ENCODE measurements at regions of chr2 and their contacts with region 1.

Region 1: GRCh38 chr2:218406209-218406948 is 6.7 kb downstream of the CTDSP1 start:
- DNase-seq: peak; percentile 73 to 97 (median 94)
- ATAC-seq: peak; percentile 69
- H3K4me3 ChIP-seq: peak overlapping the region; percentile 59
- H3K4me3 Mint-ChIP-seq: peak overlapping the region; percentile 90
- H3K27ac ChIP-seq: peak overlapping the region; percentile 61 to 78
- H3K27ac Mint-ChIP-seq: peak overlapping the region; percentile 88
- H3K4me1 ChIP-seq: peaks cover 68% of the 10 kb centered on the region
- H3K4me1 Mint-ChIP-seq: peaks cover 57% of the 10 kb centered on the region
- H3K27me3 ChIP-seq: no peaks in the 10 kb centered on the region
- H3K27me3 Mint-ChIP-seq: no peaks in the 10 kb centered on the region
- CTCF ChIP-seq: peak; percentile 67

Region 2: GRCh38 chr2:218466016-218466521 is 59.7 kb after region 1 on chr2:
- CTCF ChIA-PET with region 1: interaction called, 4 read pairs
- POLR2A ChIA-PET with region 1: interaction called, 3 read pairs
- intact Hi-C with region 1: loop called (anchors 1 to 2 kb)
- DNase-seq: peak in 3 of 14 experiments; percentile 13 to 31 (median 30)
- ATAC-seq: no peak
- H3K4me3 ChIP-seq: no peak overlapping the region
- H3K4me3 Mint-ChIP-seq: no peak overlapping the region
- H3K27ac ChIP-seq: no peak overlapping the region
- H3K27ac Mint-ChIP-seq: no peak overlapping the region
- H3K4me1 ChIP-seq: no peaks in the 10 kb centered on the region
- H3K4me1 Mint-ChIP-seq: peaks cover 7% of the 10 kb centered on the region
- H3K27me3 ChIP-seq: no peaks in the 10 kb centered on the region
- H3K27me3 Mint-ChIP-seq: no peaks in the 10 kb centered on the region
- CTCF ChIP-seq: peak; percentile 74

Region 3: GRCh38 chr2:218516614-218517013 is 110.2 kb after region 1 on chr2:
- CTCF ChIA-PET with region 1: no interaction called
- POLR2A ChIA-PET with region 1: interaction called, 4 read pairs
- intact Hi-C with region 1: loop called (anchors 1 to 5 kb)
- DNase-seq: peak in 5 of 14 experiments; percentile 3 to 66 (median 48)
- ATAC-seq: peak; percentile 75
- H3K4me3 ChIP-seq: no peak overlapping the region
- H3K4me3 Mint-ChIP-seq: no peak overlapping the region
- H3K27ac ChIP-seq: no peak overlapping the region
- H3K27ac Mint-ChIP-seq: no peak overlapping the region
- H3K4me1 ChIP-seq: no peaks in the 10 kb centered on the region
- H3K4me1 Mint-ChIP-seq: peaks cover 5% of the 10 kb centered on the region
- H3K27me3 ChIP-seq: no peaks in the 10 kb centered on the region
- H3K27me3 Mint-ChIP-seq: no peaks in the 10 kb centered on the region
- CTCF ChIP-seq: peak; percentile 64

Region 4: DNA sequence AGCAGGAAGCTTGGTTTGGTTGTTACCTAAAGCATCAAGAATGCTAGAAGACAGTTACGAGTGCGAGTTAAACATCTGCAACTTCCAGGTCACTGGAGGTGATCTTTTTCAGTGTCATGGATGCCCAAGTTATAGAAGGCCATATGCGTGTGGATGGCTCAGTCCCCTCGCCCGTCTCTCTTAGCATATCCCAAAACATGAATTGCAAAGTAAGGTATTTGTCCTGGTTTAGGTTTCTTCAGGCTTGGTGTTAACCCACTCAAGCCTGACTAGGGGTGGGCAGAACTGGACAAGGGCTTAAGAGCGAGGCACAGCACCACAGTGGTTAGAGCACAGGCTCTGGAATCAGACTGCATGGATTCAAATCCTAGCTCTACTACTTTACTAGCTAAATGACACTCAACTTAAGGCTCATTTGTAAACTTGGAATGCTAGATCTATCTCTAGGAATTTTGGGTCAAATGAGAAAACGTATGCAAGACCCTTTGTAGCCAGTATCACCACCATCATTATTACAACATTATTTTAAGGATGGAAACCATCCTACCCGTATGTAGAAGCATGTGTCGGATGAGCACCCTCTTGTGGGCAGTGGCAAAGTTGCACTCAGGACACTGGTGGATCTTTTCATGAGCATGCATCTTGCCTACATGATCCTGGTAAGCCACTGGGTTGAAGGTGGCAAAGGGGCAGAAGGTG is 241.9 kb after region 1 on chr2:
- CTCF ChIA-PET with region 1: no interaction called
- POLR2A ChIA-PET with region 1: no interaction called
- intact Hi-C with region 1: loop called (anchors 1 to 2 kb)
- DNase-seq: peak; percentile 25 to 77 (median 42)
- ATAC-seq: peak; percentile 92
- H3K4me3 ChIP-seq: no peak overlapping the region
- H3K4me3 Mint-ChIP-seq: no peak overlapping the region
- H3K27ac ChIP-seq: no peak overlapping the region
- H3K27ac Mint-ChIP-seq: no peak overlapping the region
- H3K4me1 ChIP-seq: peaks cover 8% of the 10 kb centered on the region
- H3K4me1 Mint-ChIP-seq: peaks cover 6% of the 10 kb centered on the region
- H3K27me3 ChIP-seq: no peaks in the 10 kb centered on the region
- H3K27me3 Mint-ChIP-seq: no peaks in the 10 kb centered on the region
- CTCF ChIP-seq: peak; percentile 79